AG04450 (cell line): ENCODE measurements at regions of chr18 and their contacts with region 1.

Region 1: GRCh38 chr18:75500545-75500944 is 73.0 kb upstream of the SMIM21 start:
- DNase-seq: peak; percentile 47
- H3K4me3 ChIP-seq: no peak overlapping the region
- H3K27ac ChIP-seq: no peak overlapping the region
- H3K27me3 ChIP-seq: no peaks in the 10 kb centered on the region
- CTCF ChIP-seq: no peak

Region 2: DNA sequence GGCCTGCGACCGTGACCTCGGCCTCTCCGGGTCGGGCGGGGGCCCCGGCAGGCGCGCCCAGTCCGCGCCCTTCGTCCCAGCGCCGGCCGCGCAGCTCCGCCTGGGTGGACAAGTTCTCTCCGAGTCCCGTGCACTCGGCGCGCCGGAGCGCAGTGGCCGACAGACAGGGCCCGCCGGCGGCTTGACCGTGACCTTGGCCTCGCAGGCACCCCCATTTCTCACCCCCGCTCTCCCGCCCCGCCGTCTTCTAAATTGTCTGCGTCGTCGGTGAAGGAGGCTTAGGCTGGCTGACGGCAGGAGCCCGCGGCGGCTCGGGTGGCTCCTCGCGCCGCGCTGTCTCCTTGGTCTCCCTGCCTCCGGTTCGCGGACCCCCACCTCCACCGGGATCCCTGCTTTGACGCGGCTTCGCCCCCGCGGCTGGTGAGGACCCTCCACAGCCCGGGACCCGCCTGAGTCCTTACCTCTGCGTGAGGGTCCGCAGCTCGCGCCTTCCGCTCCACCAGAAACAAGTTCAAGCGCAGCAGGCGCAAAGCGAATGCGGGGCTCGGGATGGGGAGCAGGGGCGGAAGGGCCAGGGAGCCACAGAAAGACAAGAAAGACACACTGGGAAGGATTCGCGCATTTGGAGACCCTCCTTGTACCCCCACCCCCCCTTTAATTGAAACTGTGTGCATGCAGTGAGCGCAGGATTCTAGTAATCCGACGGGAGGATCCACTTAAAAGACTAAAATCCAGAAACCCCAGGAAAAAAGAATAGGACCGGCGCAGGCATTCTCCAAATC is 295.6 kb before region 1 on chr18:
- CTCF ChIA-PET with region 1: no interaction called
- POLR2A ChIA-PET with region 1: interaction called, 10 read pairs
- DNase-seq: no peak
- H3K4me3 ChIP-seq: peak overlapping the region; percentile 57
- H3K27ac ChIP-seq: peak overlapping the region; percentile 31
- H3K27me3 ChIP-seq: peaks cover 2% of the 10 kb centered on the region
- CTCF ChIP-seq: no peak

Region 3: GRCh38 chr18:75810961-75811551 is 310.5 kb after region 1 on chr18:
- CTCF ChIA-PET with region 1: no interaction called
- POLR2A ChIA-PET with region 1: no interaction called
- DNase-seq: no peak
- H3K4me3 ChIP-seq: no peak overlapping the region
- H3K27ac ChIP-seq: no peak overlapping the region
- H3K27me3 ChIP-seq: peaks cover 3% of the 10 kb centered on the region
- CTCF ChIP-seq: no peak